Activated CD4-positive, alpha-beta T cell treated with anti-CD3 and anti-CD28 coated beads, Interleukin-2, amount 10 ng/mL, durations not matched to agents 7 days and 5 days (primary cell): ENCODE measurements at regions of chr1 and their contacts with region 1.

Region 1: GRCh38 chr1:198638894-198639635 is at the start of gene PTPRC:
- DNase-seq: peak; percentile 63
- H3K4me3 Mint-ChIP-seq: peak within 1 kb of the TSS; percentile 84
- H3K27ac Mint-ChIP-seq: peak within 1 kb of the TSS; percentile 95
- H3K4me1 Mint-ChIP-seq: peaks cover 51% of the 10 kb centered on the region
- H3K27me3 Mint-ChIP-seq: no peaks in the 10 kb centered on the region
- total RNA-seq, gene PTPRC: 700 to 862 TPM

Region 2: GRCh38 chr1:198574325-198574724 is 64.7 kb before region 1 on chr1:
- CTCF ChIA-PET with region 1: no interaction called
- POLR2A ChIA-PET with region 1: no interaction called
- DNase-seq: no peak
- H3K4me3 Mint-ChIP-seq: no peak overlapping the region
- H3K27ac Mint-ChIP-seq: no peak overlapping the region
- H3K4me1 Mint-ChIP-seq: peaks cover 2% of the 10 kb centered on the region
- H3K27me3 Mint-ChIP-seq: no peaks in the 10 kb centered on the region

Region 3: GRCh38 chr1:198620951-198621824 is 17.9 kb before region 1 on chr1:
- CTCF ChIA-PET with region 1: interaction called, 109 read pairs
- POLR2A ChIA-PET with region 1: interaction called, 8 read pairs
- DNase-seq: peak; percentile 83
- H3K4me3 Mint-ChIP-seq: peak overlapping the region; percentile 80
- H3K27ac Mint-ChIP-seq: peak overlapping the region; percentile 98
- H3K4me1 Mint-ChIP-seq: peaks cover 82% of the 10 kb centered on the region
- H3K27me3 Mint-ChIP-seq: no peaks in the 10 kb centered on the region

Region 4: GRCh38 chr1:198651650-198652400 is 12.8 kb after region 1 on chr1:
- CTCF ChIA-PET with region 1: interaction called, 46 read pairs
- POLR2A ChIA-PET with region 1: interaction called, 22 read pairs
- DNase-seq: no peak
- H3K4me3 Mint-ChIP-seq: peak overlapping the region; percentile 71
- H3K27ac Mint-ChIP-seq: peak overlapping the region; percentile 85
- H3K4me1 Mint-ChIP-seq: peaks cover 73% of the 10 kb centered on the region
- H3K27me3 Mint-ChIP-seq: no peaks in the 10 kb centered on the region

Region 5: DNA sequence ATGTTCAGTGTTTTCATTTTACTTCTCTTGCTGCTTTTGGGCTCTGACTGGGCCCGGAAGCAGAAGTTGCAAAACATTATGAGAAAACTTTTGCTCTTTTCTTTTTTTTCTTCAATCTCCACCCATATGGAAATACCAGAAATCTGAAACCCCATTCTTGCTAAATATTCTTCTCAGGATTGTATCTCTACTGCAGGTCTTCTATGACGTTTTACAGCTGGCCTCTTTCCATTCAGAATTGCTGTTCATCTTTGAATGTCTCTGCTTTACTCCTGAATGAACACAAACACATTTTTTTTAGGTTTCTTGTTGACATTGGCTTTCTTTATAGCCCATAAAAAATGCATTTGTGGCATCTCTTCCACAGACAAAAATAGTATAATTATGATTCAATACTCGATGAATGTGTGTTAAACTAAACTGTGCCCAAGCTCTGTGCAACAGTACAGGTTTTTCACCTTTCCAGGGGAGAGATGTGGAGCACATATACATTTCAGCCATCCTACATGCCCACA is 18.5 kb after region 1 on chr1:
- CTCF ChIA-PET with region 1: interaction called, 5 read pairs
- POLR2A ChIA-PET with region 1: interaction called, 22 read pairs
- DNase-seq: no peak
- H3K4me3 Mint-ChIP-seq: peak overlapping the region; percentile 76
- H3K27ac Mint-ChIP-seq: peak overlapping the region; percentile 81
- H3K4me1 Mint-ChIP-seq: peaks cover 65% of the 10 kb centered on the region
- H3K27me3 Mint-ChIP-seq: no peaks in the 10 kb centered on the region

Region 6: GRCh38 chr1:198674009-198674408 is 34.9 kb after region 1 on chr1:
- CTCF ChIA-PET with region 1: no interaction called
- POLR2A ChIA-PET with region 1: no interaction called
- DNase-seq: no peak
- H3K4me3 Mint-ChIP-seq: peak overlapping the region; percentile 50
- H3K27ac Mint-ChIP-seq: peak overlapping the region; percentile 54
- H3K4me1 Mint-ChIP-seq: peaks cover 87% of the 10 kb centered on the region
- H3K27me3 Mint-ChIP-seq: no peaks in the 10 kb centered on the region